ENCODE measurements at regions of chr3 and their contacts with region 1.

Region 1: GRCh38 chr3:58924578-58924977 is 125.2 kb downstream of the CFAP20DC start:
- DNase-seq: no peak
- ATAC-seq: no peak
- H3K4me3 ChIP-seq: no peak overlapping the region
- H3K4me3 Mint-ChIP-seq: no peak overlapping the region
- H3K27ac ChIP-seq: no peak overlapping the region
- H3K27ac Mint-ChIP-seq: no peak overlapping the region
- H3K4me1 ChIP-seq: no peaks in the 10 kb centered on the region
- H3K4me1 Mint-ChIP-seq: no peaks in the 10 kb centered on the region
- H3K27me3 ChIP-seq: no peaks in the 10 kb centered on the region
- H3K27me3 Mint-ChIP-seq: peaks cover 0 to 22% (median 9%) of the 10 kb centered on the region in 5 donors

Region 2: GRCh38 chr3:58988041-58988440 is 63.5 kb after region 1 on chr3:
- CTCF ChIA-PET with region 1: no interaction called
- POLR2A ChIA-PET with region 1: no interaction called
- intact Hi-C with region 1: loop called in 1 of 2 experiments (anchors 2 kb)
- DNase-seq: no peak
- ATAC-seq: no peak
- H3K4me3 ChIP-seq: no peak overlapping the region
- H3K4me3 Mint-ChIP-seq: no peak overlapping the region
- H3K27ac ChIP-seq: no peak overlapping the region
- H3K27ac Mint-ChIP-seq: no peak overlapping the region
- H3K4me1 ChIP-seq: no peaks in the 10 kb centered on the region
- H3K4me1 Mint-ChIP-seq: no peaks in the 10 kb centered on the region
- H3K27me3 ChIP-seq: peaks cover 0 to 3% of the 10 kb centered on the region in 2 donors
- H3K27me3 Mint-ChIP-seq: peaks cover 7 to 18% (median 10%) of the 10 kb centered on the region in 5 donors

Measured in naive thymus-derived CD4-positive, alpha-beta T cell (primary cell).